ENCODE measurements at regions of chr3 and their contacts with region 1.

Region 1: GRCh38 chr3:43894176-43895049 is 203.7 kb downstream of the ABHD5 start:
- DNase-seq: peak; percentile 74
- ATAC-seq: peak; percentile 64
- H3K4me3 ChIP-seq: peak overlapping the region; percentile 1 to 69 (median 50)
- H3K4me3 Mint-ChIP-seq: peak overlapping the region; percentile 91
- H3K27ac ChIP-seq: no peak overlapping the region
- H3K27ac Mint-ChIP-seq: peak overlapping the region; percentile 84
- H3K4me1 ChIP-seq: peaks cover 27 to 32% of the 10 kb centered on the region in 2 donors
- H3K4me1 Mint-ChIP-seq: peaks cover 38% of the 10 kb centered on the region
- H3K27me3 ChIP-seq: peaks cover 0 to 15% (median 7%) of the 10 kb centered on the region in 4 experiments
- H3K27me3 Mint-ChIP-seq: peaks cover 26% of the 10 kb centered on the region
- CTCF ChIP-seq: no peak

Region 2: DNA sequence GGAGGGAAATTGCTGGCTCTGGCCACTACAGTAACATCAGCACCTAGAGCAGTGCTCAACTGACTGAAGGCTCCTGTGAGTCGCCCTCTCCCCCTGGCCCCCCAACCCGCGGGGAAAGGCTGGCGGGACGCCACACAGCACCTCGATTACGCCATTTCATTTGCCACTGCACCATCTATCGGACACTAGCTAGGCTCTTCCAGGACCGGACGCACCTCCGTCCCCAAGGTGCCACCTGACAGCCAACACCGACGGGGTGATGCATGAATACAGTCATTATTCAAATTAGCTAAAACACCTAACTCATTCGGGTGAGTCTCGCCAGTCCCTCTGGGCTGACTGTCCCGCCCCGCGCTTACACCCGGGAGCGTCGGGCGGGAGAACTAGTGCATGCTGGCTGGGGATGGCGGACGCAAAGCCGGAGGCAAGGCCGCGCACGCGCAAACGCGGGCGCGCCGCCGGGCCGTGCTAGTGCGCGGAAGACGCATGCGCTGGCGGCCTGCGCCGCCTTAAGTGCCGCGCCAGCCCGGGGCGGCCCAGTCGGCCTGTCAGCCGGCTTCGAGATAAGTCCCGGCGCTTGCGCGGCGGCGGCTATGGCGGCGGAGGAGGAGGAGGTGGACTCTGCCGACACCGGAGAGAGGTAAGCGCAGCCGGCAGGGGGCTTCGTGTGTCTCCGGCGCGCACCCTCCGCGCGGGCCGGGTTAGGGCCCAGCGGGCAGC is 203.9 kb before region 1 on chr3 and contains the start of gene ABHD5:
- CTCF ChIA-PET with region 1: no interaction called
- POLR2A ChIA-PET with region 1: no interaction called
- intact Hi-C with region 1: loop called (anchors 2 kb)
- DNase-seq: peak; percentile 98
- ATAC-seq: peak; percentile 82
- H3K4me3 ChIP-seq: peak within 1 kb of the TSS; percentile 58 to 86 (median 83)
- H3K4me3 Mint-ChIP-seq: peak within 1 kb of the TSS; percentile 98
- H3K27ac ChIP-seq: peak within 1 kb of the TSS; percentile 58 to 87
- H3K27ac Mint-ChIP-seq: peak within 1 kb of the TSS; percentile 98
- H3K4me1 ChIP-seq: peaks cover 5 to 21% of the 10 kb centered on the region in 2 donors
- H3K4me1 Mint-ChIP-seq: peaks cover 27% of the 10 kb centered on the region
- H3K27me3 ChIP-seq: no peaks in the 10 kb centered on the region
- H3K27me3 Mint-ChIP-seq: no peaks in the 10 kb centered on the region
- CTCF ChIP-seq: peak; percentile 39
- total RNA-seq, gene ABHD5: 11.0 and 12.1 TPM in 2 replicates

Region 3: DNA sequence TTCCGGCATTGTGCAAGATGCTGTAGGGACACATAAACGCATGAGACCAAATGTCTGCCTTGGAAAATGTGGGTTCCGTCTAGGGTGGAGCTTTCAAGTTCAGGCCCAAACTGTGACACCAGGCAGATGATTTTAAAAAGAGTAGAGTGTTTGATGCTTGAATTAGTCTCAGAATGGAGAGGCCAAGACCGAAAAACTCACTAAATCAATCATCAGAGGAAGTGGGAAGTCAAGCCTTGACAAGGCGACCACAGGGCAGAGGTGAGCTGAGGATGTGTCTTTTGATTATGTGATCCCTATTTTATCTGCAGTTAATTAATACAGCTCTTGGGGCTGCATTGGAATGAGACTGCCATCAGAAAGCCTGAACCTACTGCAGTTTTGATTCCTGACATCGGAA is 71.7 kb after region 1 on chr3:
- CTCF ChIA-PET with region 1: no interaction called
- POLR2A ChIA-PET with region 1: no interaction called
- intact Hi-C with region 1: no loop called
- DNase-seq: no peak
- ATAC-seq: no peak
- H3K4me3 ChIP-seq: no peak overlapping the region
- H3K4me3 Mint-ChIP-seq: no peak overlapping the region
- H3K27ac ChIP-seq: no peak overlapping the region
- H3K27ac Mint-ChIP-seq: no peak overlapping the region
- H3K4me1 ChIP-seq: no peaks in the 10 kb centered on the region
- H3K4me1 Mint-ChIP-seq: no peaks in the 10 kb centered on the region
- H3K27me3 ChIP-seq: peaks cover 0 to 5% (median 0%) of the 10 kb centered on the region in 4 experiments
- H3K27me3 Mint-ChIP-seq: peaks cover 16% of the 10 kb centered on the region
- CTCF ChIP-seq: no peak

Region 4: DNA sequence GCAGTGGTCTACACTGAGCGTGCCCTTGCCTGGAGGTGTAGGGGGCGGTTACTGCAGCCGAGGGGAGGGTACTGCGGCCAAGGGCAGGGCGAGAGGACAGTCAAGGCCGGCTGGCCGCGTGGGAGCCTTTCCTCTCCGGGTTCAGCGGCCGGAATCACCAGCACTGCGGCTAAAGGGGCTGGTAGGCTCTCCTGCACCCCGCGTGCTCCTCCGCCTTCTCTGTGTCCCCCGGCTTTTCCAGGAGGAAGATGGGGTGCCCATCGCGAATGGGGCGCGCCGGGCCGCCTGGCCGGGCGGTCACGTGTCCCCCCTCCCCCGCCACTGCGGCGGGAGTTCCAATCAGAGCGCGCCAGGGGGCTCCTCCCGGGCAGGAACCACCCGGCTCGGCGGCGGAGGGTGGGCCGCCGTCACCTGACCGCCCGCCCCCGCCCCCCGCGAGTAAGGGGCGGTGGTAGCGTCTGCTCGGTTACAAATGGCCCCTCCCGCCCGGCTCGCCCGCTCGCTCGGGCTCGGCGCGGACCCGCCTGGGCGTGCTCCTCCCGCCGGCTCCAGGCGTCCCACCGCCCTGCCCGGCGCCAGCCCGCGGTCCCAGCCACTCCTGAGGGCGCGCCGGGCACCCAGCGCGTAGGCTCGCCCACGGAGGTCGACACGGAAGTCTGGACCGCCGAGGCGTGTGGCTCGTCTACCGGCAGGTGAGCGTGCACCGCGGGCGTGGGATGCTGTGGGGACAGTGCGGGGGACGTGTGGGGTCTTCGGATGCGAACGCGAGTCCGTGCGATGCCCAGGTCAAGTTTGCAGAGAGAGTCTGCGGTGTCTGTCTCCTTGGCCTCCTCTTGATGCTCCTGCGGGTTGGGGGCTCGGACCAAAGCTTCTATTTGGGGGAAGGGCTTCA is 104.7 kb after region 1 on chr3:
- CTCF ChIA-PET with region 1: no interaction called
- POLR2A ChIA-PET with region 1: no interaction called
- intact Hi-C with region 1: loop called (anchors 2 kb)
- DNase-seq: peak; percentile 63
- ATAC-seq: peak; percentile 57
- H3K4me3 ChIP-seq: peak overlapping the region in 4 of 5 experiments; percentile 37 to 74 (median 56)
- H3K4me3 Mint-ChIP-seq: peak overlapping the region; percentile 95
- H3K27ac ChIP-seq: no peak overlapping the region
- H3K27ac Mint-ChIP-seq: peak overlapping the region; percentile 67
- H3K4me1 ChIP-seq: peaks cover 50 to 54% of the 10 kb centered on the region in 2 donors
- H3K4me1 Mint-ChIP-seq: peaks cover 53% of the 10 kb centered on the region
- H3K27me3 ChIP-seq: peaks cover 0 to 62% (median 34%) of the 10 kb centered on the region in 4 experiments
- H3K27me3 Mint-ChIP-seq: peaks cover 57% of the 10 kb centered on the region
- CTCF ChIP-seq: no peak

Region 5: GRCh38 chr3:44045476-44046275 is 151.3 kb after region 1 on chr3:
- CTCF ChIA-PET with region 1: no interaction called
- POLR2A ChIA-PET with region 1: no interaction called
- intact Hi-C with region 1: loop called (anchors 5 kb)
- DNase-seq: peak; percentile 94
- ATAC-seq: peak; percentile 95
- H3K4me3 ChIP-seq: peak overlapping the region in 1 of 5 experiments; percentile 5
- H3K4me3 Mint-ChIP-seq: peak overlapping the region; percentile 44
- H3K27ac ChIP-seq: peak overlapping the region; percentile 57 to 75
- H3K27ac Mint-ChIP-seq: peak overlapping the region; percentile 80
- H3K4me1 ChIP-seq: peaks cover 53 to 68% of the 10 kb centered on the region in 2 donors
- H3K4me1 Mint-ChIP-seq: peaks cover 61% of the 10 kb centered on the region
- H3K27me3 ChIP-seq: no peaks in the 10 kb centered on the region
- H3K27me3 Mint-ChIP-seq: no peaks in the 10 kb centered on the region
- CTCF ChIP-seq: no peak

Measured in B cell (primary cell).